Panc1 (cell line): ENCODE measurements at regions of chr16 and their contacts with region 1.

Region 1: DNA sequence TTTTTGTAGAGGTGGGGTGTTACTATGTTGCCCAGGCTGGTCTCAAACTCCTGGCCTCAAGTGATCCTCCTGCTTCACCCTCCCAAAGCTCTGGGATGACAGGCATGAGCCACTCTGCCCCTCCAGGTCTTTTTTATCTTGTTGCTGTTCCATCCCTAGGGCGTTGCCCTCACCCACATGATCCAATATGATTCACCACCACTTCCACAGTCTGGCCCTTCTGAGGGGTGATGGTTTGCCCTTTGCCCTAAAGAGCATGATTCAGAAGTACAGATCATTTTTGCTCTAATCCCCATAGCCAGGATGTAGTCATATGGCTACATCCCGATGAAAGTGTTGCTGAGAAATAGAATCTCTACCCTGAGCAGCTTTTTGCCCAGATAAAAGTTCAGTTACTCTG is 18.8 kb downstream of the STX4 start:
- DNase-seq: peak; percentile 92
- ATAC-seq: peak; percentile 87
- H3K4me3 ChIP-seq: no peak overlapping the region
- H3K27ac ChIP-seq: no peak overlapping the region
- H3K4me1 ChIP-seq: no peaks in the 10 kb centered on the region
- H3K27me3 ChIP-seq: no peaks in the 10 kb centered on the region
- CTCF ChIP-seq: no peak

Region 2: GRCh38 chr16:31064882-31065461 is 12.8 kb after region 1 on chr16:
- CTCF ChIA-PET with region 1: no interaction called
- POLR2A ChIA-PET with region 1: interaction called, 12 read pairs
- in situ Hi-C with region 1: no loop called
- intact Hi-C with region 1: no loop called
- DNase-seq: no peak
- ATAC-seq: peak; percentile 31; the same call in 1 of the 2 replicates
- H3K4me3 ChIP-seq: no peak overlapping the region
- H3K27ac ChIP-seq: 0 out of 2 replicates have a peak overlapping the region, but pooled peaks have one; percentile 23
- H3K4me1 ChIP-seq: no peaks in the 10 kb centered on the region
- H3K27me3 ChIP-seq: no peaks in the 10 kb centered on the region
- CTCF ChIP-seq: no peak

Region 3: DNA sequence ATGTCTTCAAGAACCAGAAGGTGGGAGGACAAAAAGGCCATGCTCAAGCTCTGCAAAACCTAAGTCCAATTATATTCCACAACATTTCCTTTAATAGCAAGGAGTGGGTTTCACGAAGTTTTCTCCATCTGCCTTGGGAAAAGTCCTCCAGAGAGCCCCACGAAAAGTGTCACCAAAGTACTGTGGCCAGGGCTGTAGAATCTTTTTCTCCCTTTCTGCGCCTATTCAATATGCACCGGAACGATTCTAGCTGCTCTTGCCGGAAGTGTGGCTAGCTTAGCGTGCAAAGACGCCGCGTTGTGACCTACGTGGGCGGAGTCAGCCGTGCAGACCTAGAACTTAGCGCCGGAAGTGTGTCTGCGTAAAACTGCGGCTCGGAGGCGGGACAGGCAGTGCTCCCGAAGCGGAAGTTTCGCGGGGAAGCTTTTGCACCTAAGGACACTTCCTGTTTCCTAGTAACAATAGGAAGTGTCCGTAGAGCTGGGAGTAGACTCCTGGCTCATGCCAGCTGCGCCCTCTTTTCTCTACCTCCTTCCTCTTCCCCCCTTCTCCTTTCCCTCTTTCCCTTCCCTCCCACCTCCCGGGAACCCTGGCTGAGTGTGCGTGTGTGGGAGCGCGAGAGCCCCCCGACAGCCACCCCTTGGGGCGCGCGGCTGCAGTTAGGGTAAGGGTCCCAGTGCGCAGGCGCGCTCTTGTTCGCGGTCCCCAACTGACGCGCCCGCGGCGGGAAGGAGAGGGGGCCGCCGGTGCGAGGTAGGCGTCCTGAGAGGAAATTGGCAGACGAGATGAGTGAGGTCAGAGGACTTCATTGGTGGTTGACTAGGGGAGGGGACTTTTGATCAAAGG is 22.1 kb after region 1 on chr16 and contains the starts of genes ZNF646 and ZNF668:
- CTCF ChIA-PET with region 1: no interaction called
- POLR2A ChIA-PET with region 1: no interaction called
- in situ Hi-C with region 1: no loop called
- intact Hi-C with region 1: loop called (anchors 1 kb)
- DNase-seq: peak; percentile 96
- ATAC-seq: peak; percentile 93
- H3K4me3 ChIP-seq: peak within 1 kb of the TSS; percentile 99
- H3K27ac ChIP-seq: peak within 1 kb of the TSS; percentile 97
- H3K4me1 ChIP-seq: peaks cover 10% of the 10 kb centered on the region; the same call in 1 of the 2 replicates
- H3K27me3 ChIP-seq: no peaks in the 10 kb centered on the region
- CTCF ChIP-seq: no peak
- total RNA-seq, gene ZNF646: 26.8 TPM
- total RNA-seq, gene ZNF668: 21.5 TPM

Region 4: GRCh38 chr16:31117391-31118197 is 65.5 kb after region 1 on chr16 and contains the start of gene KAT8:
- CTCF ChIA-PET with region 1: interaction called, 3 read pairs
- POLR2A ChIA-PET with region 1: interaction called, 11 read pairs
- in situ Hi-C with region 1: no loop called
- intact Hi-C with region 1: no loop called
- DNase-seq: peak; percentile 85
- ATAC-seq: peak; percentile 97
- H3K4me3 ChIP-seq: peak within 1 kb of the TSS; percentile 62 to 95
- H3K27ac ChIP-seq: peak within 1 kb of the TSS; percentile 79
- H3K4me1 ChIP-seq: peaks cover 19% of the 10 kb centered on the region
- H3K27me3 ChIP-seq: no peaks in the 10 kb centered on the region
- CTCF ChIP-seq: no peak
- total RNA-seq, gene KAT8: 48.3 TPM